Psoas muscle (tissue), 8 donors: ENCODE measurements at regions of chr5 and their contacts with region 1.

Region 1: DNA sequence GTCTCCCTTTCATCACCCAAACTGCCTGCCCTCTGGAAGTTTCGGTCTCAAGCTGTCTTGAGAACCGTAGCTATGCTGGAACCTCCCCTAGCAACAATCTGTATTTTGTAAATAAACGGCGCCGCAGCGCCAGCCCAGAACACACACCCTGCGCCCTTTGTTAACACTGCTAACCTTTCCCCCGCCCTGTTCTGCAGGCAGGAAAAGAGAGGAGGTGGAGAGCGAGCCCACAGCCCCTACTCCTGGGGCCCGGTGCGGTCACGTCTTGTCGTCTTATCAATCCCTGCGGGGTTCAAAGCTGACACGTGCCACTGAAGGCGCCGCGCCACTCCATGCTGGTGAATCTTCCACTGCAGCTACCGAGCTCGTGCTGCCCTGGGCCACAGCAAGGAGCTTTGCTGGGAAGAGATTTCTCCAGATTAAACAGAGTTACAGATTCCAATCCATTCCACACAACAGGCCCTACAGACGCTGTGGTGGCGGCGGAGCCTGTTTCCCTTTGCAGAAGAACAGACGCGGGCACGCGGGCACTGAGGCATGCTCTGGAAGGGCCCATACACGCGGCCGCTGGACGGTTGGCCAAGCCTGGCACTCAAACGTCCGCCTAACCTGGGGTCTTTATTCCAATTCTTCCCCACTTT is 25.3 kb downstream of the ZDHHC11B start:
- DNase-seq: peak; percentile 71 to 76
- ATAC-seq: peak; percentile 47 to 84 (median 62)
- H3K4me3 ChIP-seq: peak overlapping the region; percentile 37
- H3K27ac ChIP-seq: no peak overlapping the region
- H3K4me1 ChIP-seq: peaks cover 25% of the 10 kb centered on the region
- H3K27me3 ChIP-seq: no peaks in the 10 kb centered on the region
- CTCF ChIP-seq: no peak

Region 2: DNA sequence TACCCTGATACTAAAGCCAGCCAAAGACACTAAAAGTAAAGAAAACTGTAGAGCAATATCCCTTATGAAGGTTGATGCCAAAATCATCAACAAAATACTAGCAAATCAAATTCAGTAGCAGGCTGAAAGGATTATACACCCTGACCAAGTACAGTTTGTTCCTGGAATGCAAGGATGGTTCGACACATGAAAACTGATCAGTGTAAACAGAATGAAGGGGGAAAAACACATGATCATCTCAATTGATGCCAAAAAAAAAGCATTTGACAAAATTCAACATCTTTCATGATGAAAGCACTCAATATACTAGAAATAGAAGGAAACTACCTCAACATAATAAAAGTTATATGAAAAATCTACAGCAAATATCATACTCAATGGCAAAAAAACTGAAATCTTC is 611.5 kb before region 1 on chr5:
- intact Hi-C with region 1: no loop called
- DNase-seq: no peak
- ATAC-seq: no peak
- H3K4me3 ChIP-seq: no peak overlapping the region
- H3K27ac ChIP-seq: no peak overlapping the region
- H3K4me1 ChIP-seq: no peaks in the 10 kb centered on the region
- H3K27me3 ChIP-seq: no peaks in the 10 kb centered on the region
- CTCF ChIP-seq: no peak

Region 3: DNA sequence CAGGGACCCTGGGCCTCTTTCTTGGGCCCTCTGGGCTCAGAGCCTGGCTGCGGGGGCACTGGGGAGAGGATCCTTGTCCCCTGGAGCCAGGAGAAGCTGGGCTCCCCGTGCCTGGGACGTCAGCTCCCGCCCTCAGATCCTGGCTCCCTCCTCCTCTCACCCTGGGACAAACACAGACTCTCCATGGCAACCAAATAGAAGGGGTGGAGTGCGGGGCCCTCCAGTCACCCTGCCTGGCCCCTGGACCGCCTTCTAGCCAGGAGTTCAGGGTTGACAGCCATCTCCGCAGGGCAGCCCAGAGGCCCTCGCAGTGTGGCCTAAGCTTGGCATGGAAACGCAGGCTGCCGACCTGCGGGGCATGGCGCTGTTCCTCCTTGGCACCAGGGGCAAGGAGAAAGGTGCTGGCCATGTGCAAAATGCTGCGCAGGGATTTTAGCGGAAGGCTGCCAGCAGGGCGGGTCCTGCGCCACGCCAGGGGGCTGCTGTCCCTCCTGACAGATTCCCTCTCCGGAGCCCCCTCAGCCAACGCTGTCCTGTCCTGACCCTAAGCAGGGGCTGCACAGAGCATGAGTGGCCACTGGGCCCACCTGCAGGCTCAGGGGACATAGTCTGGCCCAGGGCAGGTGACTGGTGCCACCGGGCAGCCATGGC is 90.5 kb after region 1 on chr5:
- intact Hi-C with region 1: loop called (anchors 2 to 10 kb)
- DNase-seq: peak; percentile 27 to 45
- ATAC-seq: peak in 1 of 4 donors; percentile 33
- H3K4me3 ChIP-seq: peak overlapping the region; percentile 22
- H3K27ac ChIP-seq: no peak overlapping the region
- H3K4me1 ChIP-seq: no peaks in the 10 kb centered on the region
- H3K27me3 ChIP-seq: peaks cover 0 to 31% (median 15%) of the 10 kb centered on the region in 3 donors
- CTCF ChIP-seq: no peak